Activated naive CD4-positive, alpha-beta T cell treated with anti-CD3 and anti-CD28 coated beads for 36 hours (primary cell): ENCODE measurements at regions of chr4 and their contacts with region 1.

Region 1: GRCh38 chr4:102760645-102761295 is at the start of gene MANBA:
- DNase-seq: peak; percentile 89
- H3K4me3 Mint-ChIP-seq: peak within 1 kb of the TSS; percentile 88
- H3K27ac Mint-ChIP-seq: peak within 1 kb of the TSS; percentile 36
- H3K4me1 Mint-ChIP-seq: peaks cover 27% of the 10 kb centered on the region
- H3K27me3 Mint-ChIP-seq: no peaks in the 10 kb centered on the region
- total RNA-seq, gene MANBA: 9.8 to 11.0 TPM

Region 2: GRCh38 chr4:102627831-102628523 is 132.8 kb before region 1 on chr4:
- CTCF ChIA-PET with region 1: interaction called, 5 read pairs
- intact Hi-C with region 1: loop called (anchors 1 kb)
- DNase-seq: peak; percentile 62
- H3K4me3 Mint-ChIP-seq: peak overlapping the region; percentile 22
- H3K27ac Mint-ChIP-seq: peak overlapping the region; percentile 54
- H3K4me1 Mint-ChIP-seq: peaks cover 75% of the 10 kb centered on the region
- H3K27me3 Mint-ChIP-seq: no peaks in the 10 kb centered on the region

Region 3: GRCh38 chr4:102789317-102789717 is 28.5 kb after region 1 on chr4:
- CTCF ChIA-PET with region 1: no interaction called
- intact Hi-C with region 1: loop called (anchors 1 kb)
- DNase-seq: no peak
- H3K4me3 Mint-ChIP-seq: no peak overlapping the region
- H3K27ac Mint-ChIP-seq: peak overlapping the region; percentile 2
- H3K4me1 Mint-ChIP-seq: peaks cover 26% of the 10 kb centered on the region
- H3K27me3 Mint-ChIP-seq: no peaks in the 10 kb centered on the region

Region 4: GRCh38 chr4:103019308-103020124 is 258.7 kb after region 1 on chr4 and contains the start of gene SLC9B1:
- CTCF ChIA-PET with region 1: no interaction called
- intact Hi-C with region 1: loop called (anchors 1 kb)
- DNase-seq: peak; percentile 96
- H3K4me3 Mint-ChIP-seq: peak within 1 kb of the TSS; percentile 96
- H3K27ac Mint-ChIP-seq: peak within 1 kb of the TSS; percentile 97
- H3K4me1 Mint-ChIP-seq: peaks cover 20% of the 10 kb centered on the region
- H3K27me3 Mint-ChIP-seq: no peaks in the 10 kb centered on the region
- total RNA-seq, gene SLC9B1: 2.0 to 3.5 TPM

Region 5: GRCh38 chr4:103198111-103198765 is 437.5 kb after region 1 on chr4 and contains the start of gene CENPE:
- CTCF ChIA-PET with region 1: no interaction called
- intact Hi-C with region 1: loop called (anchors 2 kb)
- DNase-seq: peak; percentile 89
- H3K4me3 Mint-ChIP-seq: peak within 1 kb of the TSS; percentile 87
- H3K27ac Mint-ChIP-seq: peak within 1 kb of the TSS; percentile 89
- H3K4me1 Mint-ChIP-seq: peaks cover 7% of the 10 kb centered on the region
- H3K27me3 Mint-ChIP-seq: peaks cover 3% of the 10 kb centered on the region
- total RNA-seq, gene CENPE: 38.1 to 45.2 TPM